ENCODE measurements at regions of chr9 and their contacts with region 1.

Region 1: GRCh38 chr9:74025402-74025894 is 471.7 kb upstream of the RORB start:
- DNase-seq: peak; percentile 96
- ATAC-seq: peak; percentile 97
- H3K4me3 ChIP-seq: no peak overlapping the region; a peak in 1 of 6 replicates
- H3K27ac ChIP-seq: peak overlapping the region; percentile 84
- H3K4me1 ChIP-seq: peaks cover 41% of the 10 kb centered on the region
- H3K27me3 ChIP-seq: no peaks in the 10 kb centered on the region
- CTCF ChIP-seq: no peak
- EP300 ChIP-seq: peak in 1 of 2 experiments; percentile 98; a peak in 2 of 4 replicates
- POLR2A ChIP-seq: no peak
- RAD21 ChIP-seq: no peak

Region 2: DNA sequence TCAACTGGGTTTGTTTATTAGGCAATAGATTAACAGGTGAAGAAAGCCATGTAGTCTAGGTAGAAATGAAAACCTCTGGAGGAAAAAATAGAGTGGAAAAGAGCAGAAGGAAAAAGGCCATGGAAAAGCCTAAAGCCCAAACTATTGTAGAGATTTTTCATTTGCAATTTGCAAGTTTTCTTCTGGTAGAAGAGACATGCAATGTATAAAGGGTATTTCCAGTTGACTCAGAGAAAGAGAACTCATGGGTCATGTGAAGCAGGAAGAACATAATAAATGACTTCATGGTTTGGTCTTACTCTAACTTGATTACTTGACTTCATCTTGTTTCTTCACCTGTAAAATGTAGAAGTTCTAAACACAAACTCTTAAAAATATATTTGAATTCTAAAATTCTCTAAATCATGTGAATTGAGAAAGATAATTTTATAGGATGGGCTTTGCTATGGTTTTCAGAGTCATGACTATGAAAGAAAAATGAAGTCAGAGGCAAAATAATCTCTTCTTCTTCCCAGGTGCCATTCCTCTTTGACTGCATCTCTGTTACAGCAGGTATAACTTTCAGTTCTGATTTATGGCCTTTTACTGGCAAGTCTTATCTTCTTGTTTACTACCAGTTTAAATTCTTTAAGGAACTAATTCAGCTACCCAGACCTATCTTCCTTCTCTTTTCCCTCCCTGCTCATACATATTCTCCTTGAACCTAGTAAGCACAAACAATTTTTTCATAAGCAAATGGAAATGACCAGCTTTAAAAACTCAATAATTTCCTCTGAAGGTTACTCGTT is 1551.8 kb before region 1 on chr9:
- CTCF ChIA-PET with region 1: no interaction called
- POLR2A ChIA-PET with region 1: no interaction called
- in situ Hi-C with region 1: no loop called
- intact Hi-C with region 1: loop called (anchors 10 kb)
- DNase-seq: no peak
- ATAC-seq: no peak
- H3K4me3 ChIP-seq: no peak overlapping the region
- H3K27ac ChIP-seq: no peak overlapping the region
- H3K4me1 ChIP-seq: peaks cover 19% of the 10 kb centered on the region
- H3K27me3 ChIP-seq: no peaks in the 10 kb centered on the region
- CTCF ChIP-seq: no peak
- EP300 ChIP-seq: no peak
- POLR2A ChIP-seq: no peak
- RAD21 ChIP-seq: no peak